ENCODE measurements at regions of chr7 and their contacts with region 1.

Region 1: DNA sequence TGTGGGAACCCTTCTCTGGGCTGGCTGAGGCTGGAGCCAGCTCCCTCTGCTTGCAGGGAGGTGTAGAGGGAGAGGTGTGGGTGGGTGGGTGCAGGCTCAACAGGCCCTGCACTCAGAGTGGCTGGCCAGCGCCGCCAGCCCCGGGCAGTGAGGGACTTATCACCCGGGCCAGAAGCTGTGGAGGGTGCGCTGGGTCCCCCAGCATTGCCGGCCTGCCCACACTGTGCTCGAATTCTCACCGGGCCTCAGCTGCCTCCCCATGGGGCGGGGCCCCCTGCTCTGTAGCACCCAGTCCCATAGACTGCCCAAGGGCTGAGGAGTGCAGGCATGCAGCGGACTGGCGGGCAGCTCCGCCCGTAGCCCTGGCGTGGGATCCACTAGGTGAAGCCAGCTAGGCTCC is 190.7 kb upstream of the TAC1 start:
- DNase-seq: no peak
- ATAC-seq: no peak
- H3K4me3 ChIP-seq: no peak overlapping the region
- H3K27ac ChIP-seq: no peak overlapping the region
- H3K4me1 ChIP-seq: no peaks in the 10 kb centered on the region
- H3K27me3 ChIP-seq: no peaks in the 10 kb centered on the region
- CTCF ChIP-seq: no peak
- EP300 ChIP-seq: no peak
- POLR2A ChIP-seq: no peak
- RAD21 ChIP-seq: no peak

Region 2: GRCh38 chr7:97480772-97481390 is 60.3 kb before region 1 on chr7:
- CTCF ChIA-PET with region 1: no interaction called
- POLR2A ChIA-PET with region 1: no interaction called
- RAD21 ChIA-PET with region 1: no interaction called
- SMC1A ChIA-PET with region 1: no interaction called
- in situ Hi-C with region 1: loop called (anchors 10 kb)
- intact Hi-C with region 1: no loop called
- DNase-seq: no peak
- ATAC-seq: no peak
- H3K4me3 ChIP-seq: no peak overlapping the region
- H3K27ac ChIP-seq: no peak overlapping the region
- H3K4me1 ChIP-seq: no peaks in the 10 kb centered on the region
- H3K27me3 ChIP-seq: no peaks in the 10 kb centered on the region
- CTCF ChIP-seq: no peak
- EP300 ChIP-seq: no peak
- POLR2A ChIP-seq: no peak
- RAD21 ChIP-seq: no peak

Region 3: DNA sequence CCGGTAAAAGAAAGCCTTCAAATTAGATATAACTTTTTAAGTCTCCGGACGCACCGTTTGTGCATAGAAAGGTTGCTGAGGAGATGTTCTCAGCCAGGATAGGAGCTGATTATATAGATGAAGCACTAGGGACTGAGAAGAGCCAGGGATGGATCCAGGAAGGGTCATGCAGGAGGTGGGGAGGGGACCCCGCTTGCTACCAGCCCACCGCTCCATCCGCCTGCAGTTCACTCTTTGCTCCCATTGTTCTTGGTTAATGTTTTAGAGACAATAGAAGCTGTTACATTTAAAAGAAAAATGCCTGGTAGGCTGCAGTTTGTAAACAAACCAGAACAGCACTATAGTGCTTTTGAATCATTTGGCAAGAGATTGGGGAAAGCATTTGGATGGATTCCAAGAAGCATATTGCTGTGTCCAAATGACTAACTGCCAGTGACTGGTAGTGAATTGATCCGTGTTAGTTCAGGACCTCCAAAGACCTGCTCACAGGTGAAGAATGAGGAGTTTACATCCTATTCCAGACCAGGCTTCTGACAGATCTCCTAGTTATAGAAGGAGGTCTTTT is 14.8 kb after region 1 on chr7:
- CTCF ChIA-PET with region 1: no interaction called
- POLR2A ChIA-PET with region 1: no interaction called
- RAD21 ChIA-PET with region 1: no interaction called
- SMC1A ChIA-PET with region 1: no interaction called
- in situ Hi-C with region 1: no loop called
- intact Hi-C with region 1: no loop called
- DNase-seq: no peak
- ATAC-seq: no peak
- H3K4me3 ChIP-seq: no peak overlapping the region
- H3K27ac ChIP-seq: no peak overlapping the region
- H3K4me1 ChIP-seq: no peaks in the 10 kb centered on the region
- H3K27me3 ChIP-seq: no peaks in the 10 kb centered on the region
- CTCF ChIP-seq: no peak
- EP300 ChIP-seq: no peak
- POLR2A ChIP-seq: no peak
- RAD21 ChIP-seq: no peak

Region 4: DNA sequence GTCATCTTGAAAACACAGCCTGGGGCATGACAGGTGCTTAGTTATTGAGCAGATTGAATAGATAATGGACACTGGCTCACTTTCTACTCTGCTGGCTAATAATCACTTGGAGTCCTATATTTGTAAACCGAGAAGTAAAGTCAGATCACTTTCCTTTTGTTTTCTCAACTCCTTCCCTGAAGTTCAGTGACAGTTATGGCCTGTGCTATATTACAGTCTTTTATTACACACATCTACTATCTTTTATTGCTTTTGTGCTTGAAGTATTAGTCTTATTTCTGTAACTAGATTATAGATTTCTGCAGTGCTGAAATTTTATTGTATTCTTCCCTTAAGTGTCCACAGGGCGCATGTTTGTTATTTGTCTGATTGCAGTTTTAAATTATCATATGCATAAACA is 54.3 kb after region 1 on chr7:
- CTCF ChIA-PET with region 1: no interaction called
- POLR2A ChIA-PET with region 1: no interaction called
- RAD21 ChIA-PET with region 1: no interaction called
- SMC1A ChIA-PET with region 1: no interaction called
- in situ Hi-C with region 1: no loop called
- intact Hi-C with region 1: no loop called
- DNase-seq: no peak
- ATAC-seq: no peak
- H3K4me3 ChIP-seq: no peak overlapping the region
- H3K27ac ChIP-seq: no peak overlapping the region
- H3K4me1 ChIP-seq: no peaks in the 10 kb centered on the region
- H3K27me3 ChIP-seq: no peaks in the 10 kb centered on the region
- CTCF ChIP-seq: no peak
- EP300 ChIP-seq: no peak
- POLR2A ChIP-seq: no peak
- RAD21 ChIP-seq: no peak

Measured in GM12878 (cell line).